Esophagus squamous epithelium (tissue), 5 donors: ENCODE measurements at regions of chr1 and their contacts with region 1.

Region 1: GRCh38 chr1:225999227-225999911 is at the start of gene SDE2:
- DNase-seq: peak; percentile 97
- H3K4me3 ChIP-seq: peak within 1 kb of the TSS; percentile 56 to 93 (median 86)
- H3K27ac ChIP-seq: peak within 1 kb of the TSS; percentile 82 to 97 (median 94)
- H3K4me1 ChIP-seq: peaks cover 21 to 73% (median 21%) of the 10 kb centered on the region in 3 donors
- H3K27me3 ChIP-seq: no peaks in the 10 kb centered on the region
- CTCF ChIP-seq: peak in 3 of 6 experiments; percentile 18 to 32 (median 19)
- POLR2A ChIP-seq: peak in 3 of 4 donors; percentile 72 to 96 (median 90)
- total RNA-seq, gene SDE2: 10.5 to 18.7 (median 14.1) TPM

Region 2: DNA sequence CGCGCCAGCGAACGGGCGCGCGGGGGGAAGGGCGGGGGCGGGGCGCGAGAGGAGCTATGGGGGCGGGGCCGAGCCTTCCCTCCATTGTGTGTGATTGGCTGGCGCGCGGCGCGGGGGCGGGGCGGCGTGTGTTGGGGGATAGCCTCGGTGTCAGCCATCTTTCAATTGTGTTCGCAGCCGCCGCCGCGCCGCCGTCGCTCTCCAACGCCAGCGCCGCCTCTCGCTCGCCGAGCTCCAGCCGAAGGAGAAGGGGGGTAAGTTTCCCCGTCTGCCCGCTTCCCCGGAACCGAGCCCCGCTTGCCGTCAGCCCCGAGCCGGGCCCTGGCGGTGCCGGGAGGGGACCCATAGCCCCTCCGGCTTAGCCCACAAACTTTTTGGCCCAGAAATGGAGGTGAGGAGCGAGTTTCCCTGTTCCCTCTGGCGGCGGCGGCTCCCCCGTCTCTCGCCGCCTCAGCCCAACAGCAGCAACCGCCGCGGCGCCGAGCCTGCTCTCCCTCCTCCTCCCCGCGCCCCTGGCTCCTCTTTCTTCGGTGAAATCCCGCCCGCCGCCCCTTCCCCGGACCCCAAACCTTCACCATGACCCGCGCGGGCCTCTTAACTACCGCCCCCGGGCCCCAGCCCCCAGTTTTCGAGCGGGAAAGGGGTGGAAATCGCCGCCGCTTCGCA is 63.3 kb after region 1 on chr1 and contains the start of gene H3-3A:
- intact Hi-C with region 1: loop called (anchors 10 kb)
- DNase-seq: peak; percentile 91
- H3K4me3 ChIP-seq: peak within 1 kb of the TSS; percentile 80 to 87 (median 84)
- H3K27ac ChIP-seq: peak within 1 kb of the TSS; percentile 96 to 100 (median 99)
- H3K4me1 ChIP-seq: peaks cover 7 to 56% (median 34%) of the 10 kb centered on the region in 3 donors
- H3K27me3 ChIP-seq: no peaks in the 10 kb centered on the region
- CTCF ChIP-seq: peak in 2 of 6 experiments; percentile 22 to 25
- POLR2A ChIP-seq: peak in 3 of 4 donors; percentile 87 to 99 (median 97)
- total RNA-seq, gene H3-3A: 358 to 544 (median 443) TPM

Region 3: GRCh38 chr1:226109829-226110248 is 110.5 kb after region 1 on chr1:
- intact Hi-C with region 1: loop called (anchors 5 kb)
- DNase-seq: peak; percentile 60
- H3K4me3 ChIP-seq: peak overlapping the region; percentile 63 to 93 (median 74)
- H3K27ac ChIP-seq: peak overlapping the region; percentile 95 to 97 (median 96)
- H3K4me1 ChIP-seq: peaks cover 13 to 50% (median 22%) of the 10 kb centered on the region in 3 donors
- H3K27me3 ChIP-seq: no peaks in the 10 kb centered on the region
- CTCF ChIP-seq: peak in 4 of 6 experiments; percentile 12 to 49 (median 31)
- POLR2A ChIP-seq: peak in 1 of 4 donors; percentile 65